ENCODE measurements at regions of chr15 and their contacts with region 1.

Region 1: GRCh38 chr15:99721104-99721778 is 12.0 kb downstream of the LYSMD4 start:
- DNase-seq: no peak
- ATAC-seq: no peak
- H3K4me3 ChIP-seq: no peak overlapping the region
- H3K27ac ChIP-seq: no peak overlapping the region
- H3K4me1 ChIP-seq: no peaks in the 10 kb centered on the region
- H3K27me3 ChIP-seq: no peaks in the 10 kb centered on the region

Region 2: DNA sequence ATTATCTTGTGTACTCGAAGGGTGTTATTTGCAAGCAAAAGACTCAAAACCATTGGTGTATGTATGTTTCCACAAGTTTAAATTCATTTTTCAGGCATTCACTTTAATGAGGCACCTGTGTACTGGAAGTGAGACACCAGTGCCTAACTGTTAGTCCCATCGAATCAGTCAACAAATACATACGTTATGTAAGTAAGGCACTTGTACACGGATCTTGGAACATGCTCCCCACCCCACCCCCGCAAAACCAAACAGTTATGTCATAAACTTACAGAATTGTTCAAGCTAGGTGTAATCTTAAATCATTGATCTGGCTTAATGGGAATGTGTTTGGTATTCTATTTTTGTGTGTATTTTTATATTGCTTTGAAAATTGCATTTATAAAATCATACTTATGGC is 452.8 kb before region 1 on chr15:
- intact Hi-C with region 1: loop called in 1 of 2 experiments (anchors 5 kb)
- DNase-seq: no peak
- ATAC-seq: no peak
- H3K4me3 ChIP-seq: no peak overlapping the region
- H3K27ac ChIP-seq: no peak overlapping the region
- H3K4me1 ChIP-seq: no peaks in the 10 kb centered on the region
- H3K27me3 ChIP-seq: no peaks in the 10 kb centered on the region